Activated CD4-positive, alpha-beta memory T cell treated with anti-CD3 and anti-CD28 coated beads for 36 hours (primary cell): ENCODE measurements at regions of chr1 and their contacts with region 1.

Region 1: DNA sequence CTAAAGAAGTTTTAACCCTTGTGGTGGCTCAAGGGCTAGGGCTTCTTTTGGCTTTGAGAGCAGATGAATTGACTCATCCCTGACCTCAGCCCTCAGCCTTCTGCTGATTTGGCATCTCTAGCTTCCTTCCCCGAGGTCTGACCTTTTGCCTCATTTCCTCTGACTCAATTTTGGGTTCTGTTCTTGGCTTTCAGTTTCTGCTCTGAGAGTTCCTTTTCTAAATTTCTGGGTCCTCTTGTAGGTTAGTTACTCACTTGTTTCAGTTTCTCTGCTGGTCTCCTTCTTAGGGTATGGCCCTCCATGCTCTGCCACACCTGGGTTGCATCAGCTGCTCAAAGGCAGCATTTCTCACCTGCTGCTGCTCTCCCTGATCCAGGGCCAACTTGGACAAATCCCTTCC is 19.4 kb downstream of the PDE4B start:
- DNase-seq: peak; percentile 79
- H3K4me3 Mint-ChIP-seq: no peak overlapping the region
- H3K27ac Mint-ChIP-seq: peak overlapping the region; percentile 11
- H3K4me1 Mint-ChIP-seq: peaks cover 18% of the 10 kb centered on the region
- H3K27me3 Mint-ChIP-seq: peaks cover 17% of the 10 kb centered on the region

Region 2: GRCh38 chr1:65393347-65393746 is 418.7 kb before region 1 on chr1:
- CTCF ChIA-PET with region 1: no interaction called
- POLR2A ChIA-PET with region 1: no interaction called
- intact Hi-C with region 1: loop called (anchors 1 kb)
- DNase-seq: peak; percentile 57
- H3K4me3 Mint-ChIP-seq: no peak overlapping the region
- H3K27ac Mint-ChIP-seq: peak overlapping the region; percentile 69
- H3K4me1 Mint-ChIP-seq: peaks cover 57% of the 10 kb centered on the region
- H3K27me3 Mint-ChIP-seq: no peaks in the 10 kb centered on the region

Region 3: DNA sequence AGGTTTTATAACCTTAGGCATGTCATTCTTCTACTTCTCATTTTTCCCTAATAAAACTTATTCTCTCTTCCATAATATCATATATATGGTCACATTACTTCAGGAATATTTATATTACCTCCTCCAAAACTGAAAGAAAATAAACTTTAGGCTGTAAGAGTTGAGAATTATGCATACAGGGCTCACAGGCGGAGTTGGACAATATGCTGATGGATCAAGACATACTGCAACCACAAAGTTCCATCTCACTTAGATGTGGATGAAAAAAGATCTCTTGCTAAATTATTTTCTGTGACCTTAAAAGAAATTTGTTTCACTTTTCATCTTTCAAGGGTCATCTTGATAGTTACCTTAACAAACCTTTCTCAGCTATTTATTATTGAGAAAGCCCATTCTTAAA is 172.0 kb before region 1 on chr1:
- CTCF ChIA-PET with region 1: no interaction called
- POLR2A ChIA-PET with region 1: no interaction called
- intact Hi-C with region 1: no loop called
- DNase-seq: no peak
- H3K4me3 Mint-ChIP-seq: no peak overlapping the region
- H3K27ac Mint-ChIP-seq: no peak overlapping the region
- H3K4me1 Mint-ChIP-seq: no peaks in the 10 kb centered on the region
- H3K27me3 Mint-ChIP-seq: peaks cover 7% of the 10 kb centered on the region

Region 4: DNA sequence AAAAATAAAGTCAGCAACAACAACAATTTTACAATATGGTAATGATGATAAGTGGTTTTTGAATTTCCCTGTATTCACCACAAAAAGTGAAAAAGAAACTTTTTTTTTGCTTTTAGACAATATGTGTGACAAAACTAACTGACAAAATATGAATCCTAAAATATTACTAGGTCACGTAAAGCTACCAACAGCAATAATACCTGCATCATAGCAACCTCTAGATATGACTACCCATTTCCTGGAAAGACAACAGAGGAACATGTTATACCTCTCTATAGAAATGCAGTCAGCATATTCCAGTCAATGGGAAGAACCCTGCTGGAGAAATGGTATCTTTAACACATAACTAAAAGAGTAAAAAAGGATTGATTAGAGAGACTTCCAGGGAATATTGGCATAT is 54.4 kb after region 1 on chr1:
- CTCF ChIA-PET with region 1: no interaction called
- POLR2A ChIA-PET with region 1: no interaction called
- intact Hi-C with region 1: loop called (anchors 1 kb)
- DNase-seq: no peak
- H3K4me3 Mint-ChIP-seq: no peak overlapping the region
- H3K27ac Mint-ChIP-seq: no peak overlapping the region
- H3K4me1 Mint-ChIP-seq: no peaks in the 10 kb centered on the region
- H3K27me3 Mint-ChIP-seq: peaks cover 9% of the 10 kb centered on the region

Region 5: GRCh38 chr1:66137235-66137634 is 325.2 kb after region 1 on chr1:
- CTCF ChIA-PET with region 1: no interaction called
- POLR2A ChIA-PET with region 1: no interaction called
- intact Hi-C with region 1: loop called (anchors 1 kb)
- DNase-seq: no peak
- H3K4me3 Mint-ChIP-seq: no peak overlapping the region
- H3K27ac Mint-ChIP-seq: no peak overlapping the region
- H3K4me1 Mint-ChIP-seq: peaks cover 6% of the 10 kb centered on the region
- H3K27me3 Mint-ChIP-seq: peaks cover 3% of the 10 kb centered on the region

Region 6: DNA sequence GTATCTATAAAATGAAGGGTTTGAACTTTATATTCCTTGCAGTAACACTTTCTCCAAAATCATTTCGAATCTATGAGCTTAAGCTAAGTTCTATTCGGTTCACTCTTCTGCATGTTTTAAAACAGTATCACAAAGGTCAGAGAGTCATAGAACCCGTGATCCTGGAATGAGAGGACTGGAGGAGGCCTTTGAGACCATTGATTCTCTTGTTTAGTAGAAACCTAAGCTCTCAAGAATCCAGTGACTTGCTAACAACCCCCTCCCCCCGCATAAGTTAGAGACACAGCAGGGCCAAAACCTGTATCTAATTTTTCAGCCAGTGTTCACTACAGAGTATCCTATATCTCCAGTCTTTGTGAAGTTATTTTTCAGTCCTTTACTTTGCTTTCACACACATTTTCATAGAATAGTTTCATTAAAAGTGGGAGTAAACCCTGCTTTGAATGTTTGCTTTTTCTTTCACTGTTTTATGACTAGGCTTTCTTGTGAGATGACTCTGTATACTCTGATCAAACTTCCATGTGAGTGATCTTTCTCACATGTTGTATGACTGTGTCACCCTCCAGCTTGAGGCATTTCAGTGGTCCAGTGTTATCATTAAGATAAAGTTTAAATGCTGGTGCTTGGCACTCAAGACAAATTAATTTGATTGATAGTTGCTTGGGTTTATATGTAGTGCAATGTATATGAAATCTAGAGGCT is 446.5 kb after region 1 on chr1:
- CTCF ChIA-PET with region 1: no interaction called
- POLR2A ChIA-PET with region 1: no interaction called
- intact Hi-C with region 1: loop called (anchors 1 kb)
- DNase-seq: no peak
- H3K4me3 Mint-ChIP-seq: no peak overlapping the region
- H3K27ac Mint-ChIP-seq: peak overlapping the region; percentile 64
- H3K4me1 Mint-ChIP-seq: peaks cover 85% of the 10 kb centered on the region
- H3K27me3 Mint-ChIP-seq: no peaks in the 10 kb centered on the region

Region 7: DNA sequence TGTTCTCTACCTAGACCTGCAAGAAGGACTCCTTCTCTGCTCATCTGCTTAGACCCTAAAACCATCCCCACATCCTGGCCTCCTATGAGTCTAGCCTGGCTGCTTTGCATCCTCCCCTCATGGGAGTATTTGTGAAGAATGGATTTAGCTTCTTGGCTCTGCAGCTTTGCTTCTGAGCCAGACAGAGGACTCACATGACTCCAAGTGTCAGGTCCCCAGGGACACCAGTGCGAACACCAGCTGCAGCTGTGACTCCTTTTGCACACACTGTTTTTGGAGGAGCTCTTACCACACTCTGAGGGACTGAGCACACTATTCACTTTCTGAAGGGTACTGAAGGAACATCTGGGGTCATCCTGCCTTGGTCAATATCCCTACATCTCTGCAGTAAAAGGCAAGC is 590.1 kb after region 1 on chr1:
- CTCF ChIA-PET with region 1: no interaction called
- POLR2A ChIA-PET with region 1: no interaction called
- intact Hi-C with region 1: loop called (anchors 1 kb)
- DNase-seq: no peak
- H3K4me3 Mint-ChIP-seq: no peak overlapping the region
- H3K27ac Mint-ChIP-seq: no peak overlapping the region
- H3K4me1 Mint-ChIP-seq: peaks cover 31% of the 10 kb centered on the region
- H3K27me3 Mint-ChIP-seq: no peaks in the 10 kb centered on the region